ENCODE measurements at regions of chr21 and their contacts with region 1.

Region 1: DNA sequence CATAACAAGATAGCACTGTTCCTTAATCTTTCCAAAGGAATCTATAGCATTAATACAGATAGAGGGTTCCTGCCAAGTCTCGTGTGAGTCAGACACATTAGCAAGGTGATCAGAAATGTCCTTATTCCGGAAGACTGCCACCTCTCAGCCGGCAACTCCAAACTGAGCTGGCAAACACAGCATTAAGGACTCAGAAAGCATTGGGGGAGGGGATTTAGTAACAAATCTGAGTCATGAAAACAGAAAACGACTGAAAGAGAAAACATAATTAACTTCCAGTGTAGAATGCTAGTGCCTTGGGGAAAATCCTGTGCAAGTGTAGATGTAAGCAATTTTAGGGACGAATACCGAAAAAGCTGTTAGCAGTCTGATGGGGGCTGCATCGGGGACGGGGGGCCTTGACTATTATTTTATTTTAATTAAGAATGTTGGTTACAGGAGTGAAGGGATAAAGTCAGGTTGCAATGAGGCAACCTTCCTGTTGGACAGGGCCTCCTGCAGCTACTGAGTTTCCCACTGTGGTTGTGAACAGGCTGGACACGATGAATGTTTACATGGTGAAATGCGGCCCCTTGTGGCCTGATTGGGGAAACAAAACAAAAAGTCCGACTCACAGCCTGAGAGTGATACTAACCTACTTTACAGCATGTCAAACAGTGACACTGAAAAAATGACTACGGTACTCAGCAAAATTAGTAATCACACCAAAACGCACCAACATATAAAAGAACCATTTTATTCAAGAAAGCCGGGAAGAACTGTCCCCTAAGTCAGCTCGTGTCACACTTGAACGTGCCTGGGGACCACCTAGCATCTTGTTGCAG is 20.7 kb downstream of the MIS18A start:
- DNase-seq: peak; percentile 60
- ATAC-seq: peak; percentile 83

Region 2: GRCh38 chr21:31781737-31782136 is 476.4 kb before region 1 on chr21:
- intact Hi-C with region 1: loop called (anchors 10 kb)
- DNase-seq: peak; percentile 34
- ATAC-seq: peak; percentile 55

Region 3: DNA sequence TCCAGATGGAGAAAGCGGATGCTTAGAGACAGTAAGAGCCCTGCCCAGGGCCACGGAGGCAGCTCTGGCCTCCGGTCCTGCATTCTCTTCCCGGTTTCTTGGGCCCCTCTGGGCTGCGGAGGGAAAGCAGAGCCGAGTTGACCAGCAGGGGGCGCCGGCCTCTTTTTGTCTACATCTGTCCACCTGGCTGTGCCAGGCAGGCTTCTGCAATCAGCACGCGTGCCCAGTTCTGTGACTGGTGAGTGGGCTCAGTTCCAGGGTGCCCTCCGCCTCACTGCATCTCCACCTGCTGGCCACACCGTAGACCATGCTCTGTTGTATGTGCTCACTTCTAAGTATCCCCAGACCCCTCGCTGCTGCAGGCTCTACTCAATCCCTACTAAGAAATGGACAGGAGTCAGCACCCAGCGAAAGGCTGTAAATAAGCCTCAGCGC is 392.1 kb before region 1 on chr21:
- intact Hi-C with region 1: loop called (anchors 5 kb)
- DNase-seq: peak; percentile 94
- ATAC-seq: peak; percentile 97

Measured in left ventricle myocardium superior (tissue), 1 donor.